ENCODE measurements at regions of chr17 and their contacts with region 1.

Region 1: DNA sequence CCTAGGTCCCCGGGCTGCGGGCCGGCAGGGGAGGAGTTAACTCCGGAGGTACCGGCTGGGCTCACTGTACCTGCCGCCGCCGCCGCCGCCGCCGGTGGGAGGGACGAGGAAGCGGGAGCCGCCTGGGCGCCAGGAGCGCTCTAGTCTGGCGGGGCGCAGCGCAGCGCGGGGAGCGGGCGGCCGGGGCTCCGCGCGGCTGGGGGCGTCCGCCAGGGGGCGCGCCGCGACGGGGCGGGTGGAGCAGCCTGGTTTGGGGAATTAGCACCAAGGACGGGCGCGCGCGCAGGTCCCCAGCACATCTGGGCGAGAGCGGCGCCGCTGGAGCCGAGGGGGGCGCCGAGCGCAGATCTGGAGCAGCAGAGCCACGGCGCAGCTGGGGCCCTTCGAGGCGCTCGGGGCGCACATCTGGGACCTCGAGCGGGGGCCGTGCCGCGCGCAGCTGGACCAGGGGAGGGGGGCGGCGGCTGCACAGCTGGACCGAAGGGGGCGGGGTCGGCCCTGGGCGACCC is at the start of gene NXPH3:
- DNase-seq: peak; percentile 62 to 81
- ATAC-seq: peak; percentile 22 to 80 (median 44)
- H3K4me3 ChIP-seq: peak within 1 kb of the TSS; percentile 56 to 79 (median 74)
- H3K27ac ChIP-seq: peak within 1 kb of the TSS in 9 of 10 donors; percentile 17 to 84 (median 61)
- H3K4me1 ChIP-seq: peaks cover 6 to 48% (median 21%) of the 10 kb centered on the region in 9 donors
- H3K27me3 ChIP-seq: peaks cover 0 to 41% (median 0%) of the 10 kb centered on the region in 7 donors
- CTCF ChIP-seq: peak in 8 of 9 donors; percentile 35 to 83 (median 68)
- total RNA-seq, gene NXPH3: 2.2 to 4.4 (median 3.2) TPM

Region 2: GRCh38 chr17:49610883-49611531 is 35.4 kb after region 1 on chr17:
- intact Hi-C with region 1: loop called in 5 of 10 experiments (anchors 2 to 5 kb)
- DNase-seq: no peak
- ATAC-seq: peak in 4 of 8 donors; percentile 15 to 30 (median 28)
- H3K4me3 ChIP-seq: no peak overlapping the region
- H3K27ac ChIP-seq: peak overlapping the region in 3 of 10 donors; percentile 6 to 33 (median 32)
- H3K4me1 ChIP-seq: peaks cover under 1 to 43% (median 26%) of the 10 kb centered on the region in 9 donors
- H3K27me3 ChIP-seq: no peaks in the 10 kb centered on the region
- CTCF ChIP-seq: no peak

Region 3: DNA sequence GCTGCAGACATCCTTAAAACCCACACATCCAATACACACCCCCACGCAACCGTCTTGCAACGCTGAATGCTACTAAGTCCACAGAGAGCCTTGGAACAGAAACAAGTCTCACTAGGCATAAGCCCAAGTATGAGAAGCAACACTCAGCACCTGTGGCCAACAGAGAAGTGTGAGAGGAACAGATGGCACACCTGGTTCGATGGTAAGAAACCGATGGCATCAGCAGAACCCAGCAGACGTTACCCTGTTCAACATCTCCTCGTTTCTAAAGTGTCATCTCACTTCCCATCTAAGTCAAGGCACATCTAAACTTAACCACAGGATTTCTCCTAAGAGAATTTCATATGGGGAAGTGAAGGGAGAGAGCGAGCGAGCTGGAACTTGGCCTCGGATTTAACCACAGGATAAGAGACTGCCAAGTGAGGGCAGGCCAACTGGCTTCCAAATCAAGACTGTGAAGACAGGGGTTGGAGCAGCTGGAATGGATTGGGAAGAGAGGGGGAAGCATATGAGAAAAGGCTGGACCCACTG is 41.0 kb after region 1 on chr17:
- intact Hi-C with region 1: loop called in 5 of 10 experiments (anchors 2 to 5 kb)
- DNase-seq: peak; percentile 65 to 74
- ATAC-seq: peak; percentile 81 to 92 (median 84)
- H3K4me3 ChIP-seq: peak overlapping the region in 1 of 10 donors; percentile 3
- H3K27ac ChIP-seq: peak overlapping the region in 9 of 10 donors; percentile 2 to 70 (median 59)
- H3K4me1 ChIP-seq: peaks cover 4 to 70% (median 42%) of the 10 kb centered on the region in 9 donors
- H3K27me3 ChIP-seq: no peaks in the 10 kb centered on the region
- CTCF ChIP-seq: no peak

Region 4: DNA sequence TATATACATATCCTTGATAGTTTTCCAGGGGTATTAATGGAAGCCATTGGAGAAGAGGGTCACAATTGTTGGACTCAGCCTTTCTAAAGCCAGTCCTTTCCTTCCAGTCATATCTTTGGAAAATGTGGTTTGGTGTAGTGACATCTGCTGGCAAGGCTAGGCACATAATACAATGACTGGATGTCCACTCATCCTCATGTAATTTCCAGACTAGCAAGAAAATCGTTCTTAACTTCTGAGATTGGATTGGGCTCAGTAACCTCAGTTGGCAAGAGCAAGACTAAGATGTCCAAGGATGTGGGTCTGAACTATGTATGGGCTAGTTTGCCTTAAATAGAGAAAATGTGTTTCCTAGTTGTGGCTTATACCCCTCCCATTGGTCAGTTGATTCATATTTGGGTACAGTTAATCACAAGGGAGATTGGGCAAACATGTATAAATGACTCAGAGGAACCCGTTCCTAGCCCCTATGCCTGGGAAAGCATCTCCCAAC is 204.2 kb after region 1 on chr17:
- intact Hi-C with region 1: loop called in 4 of 10 experiments (anchors 5 to 10 kb)
- DNase-seq: peak in 1 of 2 donors; percentile 42
- ATAC-seq: peak; percentile 19 to 68 (median 64)
- H3K4me3 ChIP-seq: no peak overlapping the region
- H3K27ac ChIP-seq: peak overlapping the region in 3 of 10 donors; percentile 17 to 60 (median 17)
- H3K4me1 ChIP-seq: peaks cover 4 to 68% (median 46%) of the 10 kb centered on the region in 9 donors
- H3K27me3 ChIP-seq: no peaks in the 10 kb centered on the region
- CTCF ChIP-seq: peak in 8 of 9 donors; percentile 31 to 78 (median 64)

Region 5: GRCh38 chr17:49788478-49789242 is 213.0 kb after region 1 on chr17 and contains the start of gene KAT7:
- intact Hi-C with region 1: loop called in 3 of 10 experiments (anchors 5 kb)
- DNase-seq: peak; percentile 99
- ATAC-seq: peak; percentile 95 to 97 (median 96)
- H3K4me3 ChIP-seq: peak within 1 kb of the TSS; percentile 77 to 100 (median 94)
- H3K27ac ChIP-seq: peak within 1 kb of the TSS; percentile 88 to 100 (median 98)
- H3K4me1 ChIP-seq: peaks cover 6 to 67% (median 57%) of the 10 kb centered on the region in 9 donors
- H3K27me3 ChIP-seq: no peaks in the 10 kb centered on the region
- CTCF ChIP-seq: peak in 1 of 9 donors; percentile 41
- total RNA-seq, gene KAT7: 48.9 to 81.3 (median 66.3) TPM

Region 6: DNA sequence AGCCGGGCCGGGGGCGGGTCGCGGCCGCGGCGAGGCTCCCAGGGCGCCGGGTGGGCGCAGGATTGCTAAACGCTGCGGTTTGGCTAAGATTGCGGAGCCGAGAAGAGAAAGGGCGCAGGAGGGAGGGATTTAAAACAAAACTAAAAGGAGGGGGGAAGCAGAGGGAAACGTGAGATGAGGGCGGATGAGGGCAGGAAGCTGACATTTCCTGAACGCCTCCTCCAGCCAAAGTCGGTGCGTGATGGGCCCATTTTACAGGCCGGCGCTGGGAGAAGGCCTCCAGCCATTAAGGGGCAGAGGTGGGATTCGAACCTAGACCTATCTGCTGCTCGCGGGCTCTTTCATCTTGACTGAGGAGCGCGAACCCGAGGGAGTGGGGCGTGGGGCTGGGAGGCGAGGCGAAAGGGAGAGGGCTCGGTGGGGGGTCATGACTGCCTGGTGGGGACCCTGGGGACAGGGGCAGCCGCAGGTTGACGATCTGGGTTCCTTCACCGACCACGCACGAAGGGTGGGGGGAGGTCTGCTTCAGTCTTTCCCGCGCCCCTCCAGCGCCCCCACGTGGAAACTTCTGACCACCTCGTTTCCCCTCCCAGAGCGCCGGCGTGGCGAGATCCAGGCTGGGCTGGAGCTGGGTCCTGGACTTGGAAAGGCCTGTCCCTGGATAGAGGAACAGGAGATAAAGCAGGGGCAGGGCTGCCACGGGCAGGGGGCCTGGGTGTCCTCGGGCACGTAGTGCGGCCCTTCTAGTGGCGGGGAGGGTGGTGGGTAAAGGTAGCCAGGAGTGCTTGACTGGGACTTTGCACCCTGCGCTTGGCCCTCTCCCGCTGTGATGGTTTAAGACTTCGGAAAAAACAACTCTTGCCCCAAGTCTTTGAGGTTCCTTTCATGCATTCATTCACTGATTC is 276.0 kb after region 1 on chr17:
- intact Hi-C with region 1: loop called in 4 of 10 experiments (anchors 5 to 10 kb)
- DNase-seq: peak; percentile 84
- ATAC-seq: peak; percentile 76 to 91 (median 86)
- H3K4me3 ChIP-seq: peak overlapping the region; percentile 38 to 76 (median 62)
- H3K27ac ChIP-seq: peak overlapping the region in 9 of 10 donors; percentile 8 to 75 (median 62)
- H3K4me1 ChIP-seq: peaks cover 3 to 25% (median 19%) of the 10 kb centered on the region in 9 donors
- H3K27me3 ChIP-seq: peaks cover 0 to 6% (median 0%) of the 10 kb centered on the region in 7 donors
- CTCF ChIP-seq: peak; percentile 43 to 86 (median 83)

Measured in heart right ventricle (tissue), 16 donors.